Activated naive CD4-positive, alpha-beta T cell treated with anti-CD3 and anti-CD28 coated beads for 36 hours (primary cell): ENCODE measurements at regions of chr5 and their contacts with region 1.

Region 1: DNA sequence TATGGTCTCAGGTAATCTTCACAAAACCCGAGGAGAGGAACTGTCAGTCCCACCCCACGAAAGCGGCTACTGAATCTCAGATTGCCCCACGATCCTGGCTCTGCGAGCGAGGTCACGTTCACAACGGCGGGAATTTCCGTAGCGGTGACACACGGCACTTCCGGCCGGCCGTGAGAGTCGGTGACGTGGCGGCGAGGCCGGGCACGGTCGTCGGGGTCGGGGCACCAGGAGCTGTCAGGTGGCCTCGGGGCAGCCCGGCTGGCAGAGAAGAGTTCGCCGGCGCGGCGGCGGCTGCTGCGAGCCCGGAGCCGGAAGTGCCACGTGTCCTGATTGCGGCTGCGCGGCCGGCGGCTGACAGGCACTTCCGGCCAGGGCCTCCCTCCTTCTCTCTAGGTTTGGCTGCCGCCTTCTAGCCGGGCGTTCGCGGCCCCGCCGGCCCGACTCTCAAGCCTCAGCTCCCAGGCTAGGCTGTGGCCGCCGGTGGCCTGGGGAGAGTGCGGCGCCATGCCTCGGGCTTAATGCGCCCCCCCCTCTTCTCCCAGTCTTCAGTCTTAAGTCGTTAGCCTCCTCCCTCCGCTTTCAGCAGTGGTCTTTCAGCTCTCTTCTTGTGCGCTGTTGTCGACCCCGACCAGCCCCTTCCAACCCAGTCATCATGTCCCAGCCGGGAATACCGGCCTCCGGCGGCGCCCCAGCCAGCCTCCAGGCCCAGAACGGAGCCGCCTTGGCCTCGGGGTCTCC is at the start of gene SEC24A:
- DNase-seq: peak; percentile 92
- H3K4me3 Mint-ChIP-seq: peak within 1 kb of the TSS; percentile 89
- H3K27ac Mint-ChIP-seq: peak within 1 kb of the TSS; percentile 100
- H3K4me1 Mint-ChIP-seq: peaks cover 35% of the 10 kb centered on the region
- H3K27me3 Mint-ChIP-seq: no peaks in the 10 kb centered on the region
- total RNA-seq, gene SEC24A: 16.6 to 18.5 TPM

Region 2: DNA sequence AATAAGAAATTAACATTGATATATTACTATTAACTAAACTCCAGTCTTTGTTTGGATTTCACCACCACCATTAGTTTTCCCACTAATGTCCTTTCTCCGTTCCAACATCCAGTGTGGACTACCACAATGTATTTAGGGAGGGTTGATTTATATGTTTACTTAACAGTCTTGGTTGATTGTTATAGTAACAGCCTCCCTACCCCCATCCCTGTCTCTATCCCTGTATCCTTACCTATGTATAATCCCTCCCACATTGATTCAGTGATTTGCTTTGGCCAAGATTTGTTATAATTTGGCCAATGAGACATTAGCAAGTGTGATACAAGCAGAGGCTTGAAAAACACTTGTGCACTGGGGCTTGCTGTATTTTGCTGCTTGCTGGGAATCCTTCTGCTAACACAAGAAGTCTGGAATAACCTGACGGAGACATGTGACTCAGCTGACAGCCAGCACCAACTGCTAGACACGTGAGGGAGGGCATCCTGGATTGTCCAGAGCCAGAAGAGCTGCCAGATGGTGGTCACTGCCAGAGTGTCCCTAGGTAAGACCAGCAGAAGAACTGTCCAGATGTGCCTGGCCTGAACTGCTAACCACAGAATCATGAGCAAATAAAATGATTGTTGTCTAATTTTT is 585.3 kb before region 1 on chr5:
- CTCF ChIA-PET with region 1: no interaction called
- intact Hi-C with region 1: no loop called
- DNase-seq: no peak
- H3K4me3 Mint-ChIP-seq: no peak overlapping the region
- H3K27ac Mint-ChIP-seq: no peak overlapping the region
- H3K4me1 Mint-ChIP-seq: peaks cover 26% of the 10 kb centered on the region
- H3K27me3 Mint-ChIP-seq: no peaks in the 10 kb centered on the region

Region 3: GRCh38 chr5:134176511-134177368 is 471.9 kb before region 1 on chr5 and contains the start of gene SKP1:
- CTCF ChIA-PET with region 1: no interaction called
- intact Hi-C with region 1: loop called (anchors 1 kb)
- DNase-seq: peak; percentile 83
- H3K4me3 Mint-ChIP-seq: peak within 1 kb of the TSS; percentile 96
- H3K27ac Mint-ChIP-seq: peak within 1 kb of the TSS; percentile 94
- H3K4me1 Mint-ChIP-seq: peaks cover 31% of the 10 kb centered on the region
- H3K27me3 Mint-ChIP-seq: no peaks in the 10 kb centered on the region
- total RNA-seq, gene SKP1: 307 to 309 TPM

Region 4: GRCh38 chr5:134206627-134207160 is 441.9 kb before region 1 on chr5:
- CTCF ChIA-PET with region 1: no interaction called
- intact Hi-C with region 1: no loop called
- DNase-seq: no peak
- H3K4me3 Mint-ChIP-seq: no peak overlapping the region
- H3K27ac Mint-ChIP-seq: no peak overlapping the region
- H3K4me1 Mint-ChIP-seq: peaks cover 30% of the 10 kb centered on the region
- H3K27me3 Mint-ChIP-seq: no peaks in the 10 kb centered on the region

Region 5: DNA sequence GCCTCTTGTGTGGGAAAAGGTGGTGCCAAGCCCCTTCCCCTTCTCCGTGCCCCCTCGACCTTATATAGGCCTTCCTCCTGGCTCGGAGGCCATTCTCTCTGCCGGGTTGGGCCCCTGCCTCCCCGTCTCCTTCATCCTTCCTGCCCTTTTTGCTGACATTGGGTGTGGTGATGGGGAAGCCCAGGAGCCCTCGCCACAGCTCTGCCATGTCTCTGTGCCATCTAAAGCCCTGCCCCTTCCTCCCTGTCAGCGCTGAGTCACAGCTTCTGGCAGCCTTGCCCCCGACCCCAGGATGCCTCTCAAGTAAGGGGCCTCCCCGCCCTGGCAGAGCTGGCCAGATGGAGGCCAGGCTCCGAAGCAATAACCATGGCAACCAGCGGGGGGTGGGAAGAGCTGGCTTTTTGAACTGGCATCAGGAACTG is 92.7 kb before region 1 on chr5:
- CTCF ChIA-PET with region 1: no interaction called
- intact Hi-C with region 1: loop called (anchors 1 kb)
- DNase-seq: peak; percentile 98
- H3K4me3 Mint-ChIP-seq: peak overlapping the region; percentile 80
- H3K27ac Mint-ChIP-seq: peak overlapping the region; percentile 100
- H3K4me1 Mint-ChIP-seq: peaks cover 38% of the 10 kb centered on the region
- H3K27me3 Mint-ChIP-seq: no peaks in the 10 kb centered on the region

Region 6: GRCh38 chr5:134609232-134609851 is 39.3 kb before region 1 on chr5:
- CTCF ChIA-PET with region 1: interaction called, 3 read pairs
- intact Hi-C with region 1: loop called (anchors 1 kb)
- DNase-seq: no peak
- H3K4me3 Mint-ChIP-seq: peak overlapping the region; percentile 17
- H3K27ac Mint-ChIP-seq: peak overlapping the region; percentile 87
- H3K4me1 Mint-ChIP-seq: peaks cover 37% of the 10 kb centered on the region
- H3K27me3 Mint-ChIP-seq: no peaks in the 10 kb centered on the region

Region 7: DNA sequence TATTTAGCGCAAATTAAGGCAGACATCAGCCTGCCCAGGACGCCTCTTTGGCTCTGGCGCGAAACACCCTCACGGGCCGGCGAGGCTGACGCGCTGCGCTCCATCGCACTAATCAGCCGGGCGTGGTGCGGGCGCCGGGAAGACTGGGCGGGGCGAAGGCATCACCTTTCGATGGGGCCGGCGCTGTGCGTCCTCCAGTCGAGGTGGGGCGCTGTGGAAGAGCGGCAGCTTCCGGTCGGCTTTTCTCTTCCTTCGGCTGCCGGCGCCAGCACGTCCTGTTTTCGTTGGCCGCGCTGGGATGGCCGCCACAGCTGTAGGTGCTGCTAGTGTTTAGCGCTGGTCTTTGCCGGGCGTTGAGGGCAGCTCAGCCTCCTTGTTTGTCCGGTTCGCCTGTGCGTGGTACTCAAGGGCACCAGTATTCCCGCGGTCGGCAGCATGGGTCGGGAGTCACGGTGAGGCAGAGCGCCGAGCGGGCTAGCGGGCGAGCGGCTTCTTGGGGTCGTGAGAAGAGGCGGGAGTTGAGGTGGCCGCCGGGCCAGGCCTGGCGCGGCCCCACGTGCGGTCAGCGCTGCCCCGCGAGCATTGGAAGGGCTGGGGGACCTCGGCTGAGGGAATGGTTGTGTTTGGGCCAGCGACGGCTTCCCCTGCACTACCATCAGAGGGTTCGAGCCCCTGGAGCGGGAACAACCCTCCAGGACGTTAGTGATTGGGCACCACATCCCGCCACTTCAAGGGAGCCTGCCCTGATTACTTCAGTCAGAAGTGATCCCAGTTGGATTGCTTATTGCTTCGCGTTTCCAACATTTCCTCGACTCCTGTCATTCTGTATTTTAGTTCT is 110.1 kb after region 1 on chr5 and contains the start of gene DDX46:
- CTCF ChIA-PET with region 1: interaction called, 3 read pairs
- intact Hi-C with region 1: loop called (anchors 1 kb)
- DNase-seq: peak; percentile 97
- H3K4me3 Mint-ChIP-seq: peak within 1 kb of the TSS; percentile 99
- H3K27ac Mint-ChIP-seq: peak within 1 kb of the TSS; percentile 80
- H3K4me1 Mint-ChIP-seq: peaks cover 34% of the 10 kb centered on the region
- H3K27me3 Mint-ChIP-seq: no peaks in the 10 kb centered on the region
- total RNA-seq, gene DDX46: 47.3 to 48.0 TPM

Region 8: GRCh38 chr5:134845852-134846640 is 197.5 kb after region 1 on chr5 and contains the start of gene C5orf24:
- CTCF ChIA-PET with region 1: no interaction called
- intact Hi-C with region 1: loop called (anchors 1 kb)
- DNase-seq: peak; percentile 96
- H3K4me3 Mint-ChIP-seq: peak within 1 kb of the TSS; percentile 88
- H3K27ac Mint-ChIP-seq: peak within 1 kb of the TSS; percentile 97
- H3K4me1 Mint-ChIP-seq: peaks cover 32% of the 10 kb centered on the region
- H3K27me3 Mint-ChIP-seq: no peaks in the 10 kb centered on the region
- total RNA-seq, gene C5orf24: 17.6 to 21.2 TPM

Region 9: DNA sequence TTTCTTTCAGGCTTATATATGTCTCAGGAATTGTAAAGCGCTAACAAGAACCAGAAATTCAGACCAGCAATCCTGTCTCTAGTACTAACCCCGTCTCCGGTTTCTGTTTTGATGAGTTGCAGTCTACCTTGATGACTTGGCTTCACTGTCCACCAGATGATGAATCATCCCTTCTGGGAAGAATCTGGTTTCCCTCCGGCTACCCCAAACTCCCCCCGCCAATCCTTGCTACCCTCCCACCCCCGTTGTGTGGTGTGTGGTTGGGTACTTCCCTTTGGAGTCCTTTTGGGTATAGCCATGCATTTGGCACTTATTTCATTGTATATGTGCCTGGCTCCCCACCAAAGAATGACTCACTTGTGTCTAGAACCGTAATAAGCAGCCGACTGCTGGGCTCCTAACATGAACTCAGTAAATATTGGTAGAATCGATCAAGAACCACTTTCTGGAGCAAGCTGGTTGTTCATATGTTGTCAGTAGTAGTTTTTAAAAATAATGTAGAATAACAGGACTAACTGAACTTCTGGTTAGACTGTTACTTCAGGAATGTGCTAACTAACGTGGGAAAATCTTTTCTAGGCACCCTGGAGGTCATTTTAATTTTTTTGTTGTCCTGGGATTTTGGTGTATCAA is 1371.9 kb after region 1 on chr5:
- CTCF ChIA-PET with region 1: no interaction called
- intact Hi-C with region 1: no loop called
- DNase-seq: no peak
- H3K4me3 Mint-ChIP-seq: no peak overlapping the region
- H3K27ac Mint-ChIP-seq: no peak overlapping the region
- H3K4me1 Mint-ChIP-seq: no peaks in the 10 kb centered on the region
- H3K27me3 Mint-ChIP-seq: peaks cover 17% of the 10 kb centered on the region